ENCODE measurements at regions of chr2 and their contacts with region 1.

Region 1: GRCh38 chr2:216989340-216990129 is 129.7 kb upstream of the TNP1 start:
- DNase-seq: peak in 1 of 5 donors; percentile 46
- H3K4me3 ChIP-seq: no peak overlapping the region
- H3K27ac ChIP-seq: no peak overlapping the region
- H3K4me1 ChIP-seq: no peaks in the 10 kb centered on the region
- H3K27me3 ChIP-seq: no peaks in the 10 kb centered on the region
- CTCF ChIP-seq: peak; percentile 5

Region 2: DNA sequence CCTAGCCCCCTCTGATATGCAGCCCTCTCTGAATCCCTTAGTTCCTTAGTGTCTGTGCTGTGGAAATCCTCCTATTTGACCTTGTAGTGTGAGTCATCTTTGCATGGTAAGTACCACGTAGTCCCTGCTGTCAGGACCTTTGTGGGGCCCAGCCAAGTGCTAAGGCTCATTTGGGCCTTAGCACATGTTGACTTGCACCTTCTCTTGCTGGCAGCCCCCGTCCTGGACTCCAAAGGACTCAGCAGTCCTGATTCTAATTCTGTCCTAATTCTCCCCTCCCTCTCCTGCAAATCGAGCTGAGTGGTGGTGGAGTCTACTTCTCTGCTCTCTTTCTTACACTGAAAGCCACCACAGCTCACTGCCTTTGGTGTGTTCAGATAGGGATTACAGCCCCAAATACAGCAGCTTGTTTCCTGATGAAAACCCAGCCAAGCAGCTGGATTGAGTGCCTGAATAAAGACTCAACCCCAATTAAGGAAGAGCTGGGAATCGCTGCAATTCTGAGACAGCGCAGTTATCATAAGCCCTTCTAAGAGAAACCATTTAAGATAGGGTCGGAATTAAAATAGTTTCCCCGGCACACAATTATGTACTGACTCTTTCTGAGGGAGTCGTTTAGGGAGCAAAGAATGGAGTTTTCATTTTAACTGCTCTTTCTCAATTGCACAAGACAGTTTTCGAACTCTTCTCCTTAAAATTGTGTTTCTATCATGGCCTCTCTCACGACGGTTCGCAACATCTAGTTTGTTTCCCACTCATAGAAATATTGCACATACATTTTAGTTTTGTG is 85.9 kb after region 1 on chr2:
- intact Hi-C with region 1: no loop called
- DNase-seq: no peak
- H3K4me3 ChIP-seq: no peak overlapping the region
- H3K27ac ChIP-seq: no peak overlapping the region
- H3K4me1 ChIP-seq: no peaks in the 10 kb centered on the region
- H3K27me3 ChIP-seq: no peaks in the 10 kb centered on the region
- CTCF ChIP-seq: no peak

Region 3: DNA sequence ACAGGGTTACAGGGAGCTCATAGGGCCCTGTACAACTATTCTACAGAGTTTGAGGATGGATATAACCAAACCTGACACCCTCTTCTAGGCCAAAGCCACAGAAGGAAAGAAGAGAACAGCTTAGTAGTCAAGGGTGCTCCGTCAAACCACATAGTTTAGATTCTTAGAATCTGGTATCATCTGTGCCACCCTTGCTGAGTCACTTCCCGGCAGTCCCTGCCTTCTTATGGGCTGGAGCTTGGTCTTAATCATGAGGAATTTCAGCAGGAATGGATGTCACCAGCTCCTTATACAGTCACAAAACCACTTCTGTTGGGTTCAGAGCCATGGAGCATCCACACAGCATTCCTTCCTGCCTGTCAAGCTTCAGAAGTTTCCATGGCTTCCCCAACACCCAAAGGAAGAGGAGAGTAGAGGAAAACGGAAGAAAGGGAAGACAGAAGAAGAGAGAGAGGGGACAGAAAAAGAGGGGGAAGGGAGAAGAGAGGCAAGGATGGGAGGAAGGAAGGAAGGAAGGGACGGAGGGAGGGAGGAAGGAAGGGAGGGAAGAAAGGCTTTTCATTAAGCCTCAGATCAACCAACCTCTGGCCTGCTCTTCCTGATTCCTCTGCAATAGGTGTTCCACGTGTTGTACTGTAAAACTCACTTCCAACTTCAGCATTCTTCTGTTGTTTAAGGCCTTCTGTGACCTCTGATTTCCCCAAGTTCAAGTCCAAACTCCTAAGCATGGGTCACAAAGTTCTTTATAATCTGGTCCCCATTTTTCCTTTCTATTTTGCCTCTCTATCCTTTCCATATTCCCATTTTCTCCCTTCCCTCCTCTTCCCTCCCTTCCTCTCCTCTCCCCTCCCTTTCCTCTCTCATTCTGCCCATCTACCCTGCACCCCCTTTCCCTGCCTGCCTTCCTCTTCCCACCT is 116.5 kb after region 1 on chr2:
- intact Hi-C with region 1: loop called (anchors 10 kb)
- DNase-seq: peak in 1 of 5 donors; percentile 78
- H3K4me3 ChIP-seq: no peak overlapping the region
- H3K27ac ChIP-seq: no peak overlapping the region
- H3K4me1 ChIP-seq: no peaks in the 10 kb centered on the region
- H3K27me3 ChIP-seq: no peaks in the 10 kb centered on the region
- CTCF ChIP-seq: no peak

Region 4: GRCh38 chr2:218017211-218018053 is 1027.9 kb after region 1 on chr2:
- intact Hi-C with region 1: no loop called
- DNase-seq: no peak
- H3K4me3 ChIP-seq: no peak overlapping the region
- H3K27ac ChIP-seq: no peak overlapping the region
- H3K4me1 ChIP-seq: no peaks in the 10 kb centered on the region
- H3K27me3 ChIP-seq: no peaks in the 10 kb centered on the region
- CTCF ChIP-seq: no peak